CD8-positive, alpha-beta T cell (primary cell): ENCODE measurements at regions of chr1 and their contacts with region 1.

Region 1: GRCh38 chr1:235783148-235783776 is 83.4 kb downstream of the LYST start:
- DNase-seq: peak in 2 of 9 experiments; percentile 20 to 39
- ATAC-seq: no peak
- H3K4me3 ChIP-seq: no peak overlapping the region
- H3K4me3 Mint-ChIP-seq: no peak overlapping the region
- H3K27ac ChIP-seq: no peak overlapping the region
- H3K27ac Mint-ChIP-seq: no peak overlapping the region
- H3K4me1 ChIP-seq: no peaks in the 10 kb centered on the region
- H3K4me1 Mint-ChIP-seq: no peaks in the 10 kb centered on the region
- H3K27me3 ChIP-seq: no peaks in the 10 kb centered on the region
- H3K27me3 Mint-ChIP-seq: no peaks in the 10 kb centered on the region
- CTCF ChIP-seq: peak; percentile 63

Region 2: DNA sequence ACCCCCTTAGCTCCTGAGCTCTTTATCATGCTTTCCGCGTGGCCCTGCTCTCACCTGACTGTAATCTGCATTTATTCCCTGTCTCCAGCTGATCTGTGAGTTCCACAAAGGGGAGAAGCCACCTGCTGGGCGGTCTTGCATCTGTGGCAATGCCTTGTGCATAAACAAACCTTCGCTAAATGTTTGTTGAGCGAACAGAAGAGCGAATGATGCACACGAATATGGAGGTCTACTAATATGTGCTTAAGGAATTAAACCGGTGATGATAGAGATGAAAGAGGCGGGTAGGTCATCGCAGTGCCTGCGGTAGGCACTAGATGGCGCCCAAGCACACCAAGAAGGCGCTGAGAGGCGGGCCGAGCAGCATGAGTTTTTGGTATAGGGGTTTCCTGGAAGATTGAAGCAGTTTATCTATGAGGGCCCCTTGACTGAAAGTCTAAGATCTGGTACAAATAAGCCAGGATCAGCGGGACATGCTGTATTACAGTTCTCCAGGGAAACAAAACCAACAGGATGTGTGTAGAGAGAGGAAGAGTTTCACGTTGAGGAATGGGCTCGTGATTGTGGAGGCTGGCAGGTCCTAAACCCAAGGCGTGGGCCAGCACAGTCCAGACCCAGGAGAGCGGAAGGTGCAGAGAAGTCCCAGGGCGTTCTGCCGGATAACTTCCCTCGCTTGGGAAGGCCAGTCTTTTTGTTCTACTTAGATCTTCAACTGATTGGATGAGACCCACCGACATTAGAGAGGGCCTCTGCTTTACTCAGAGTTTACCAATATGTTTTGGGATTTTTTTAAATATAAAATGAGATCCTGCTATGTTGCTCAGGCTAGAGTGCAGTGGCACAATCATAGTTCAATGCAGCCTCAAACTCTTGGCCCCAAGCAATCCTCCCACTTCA is 689.3 kb before region 1 on chr1:
- CTCF ChIA-PET with region 1: no interaction called
- POLR2A ChIA-PET with region 1: no interaction called
- intact Hi-C with region 1: loop called in 1 of 2 experiments (anchors 5 kb)
- DNase-seq: peak; percentile 74 to 90 (median 82)
- ATAC-seq: peak; percentile 100
- H3K4me3 ChIP-seq: no peak overlapping the region
- H3K4me3 Mint-ChIP-seq: no peak overlapping the region
- H3K27ac ChIP-seq: no peak overlapping the region
- H3K27ac Mint-ChIP-seq: no peak overlapping the region
- H3K4me1 ChIP-seq: peaks cover 3% of the 10 kb centered on the region
- H3K4me1 Mint-ChIP-seq: peaks cover 7% of the 10 kb centered on the region
- H3K27me3 ChIP-seq: peaks cover 0 to 4% of the 10 kb centered on the region in 2 experiments
- H3K27me3 Mint-ChIP-seq: peaks cover 15% of the 10 kb centered on the region
- CTCF ChIP-seq: peak; percentile 91

Region 3: DNA sequence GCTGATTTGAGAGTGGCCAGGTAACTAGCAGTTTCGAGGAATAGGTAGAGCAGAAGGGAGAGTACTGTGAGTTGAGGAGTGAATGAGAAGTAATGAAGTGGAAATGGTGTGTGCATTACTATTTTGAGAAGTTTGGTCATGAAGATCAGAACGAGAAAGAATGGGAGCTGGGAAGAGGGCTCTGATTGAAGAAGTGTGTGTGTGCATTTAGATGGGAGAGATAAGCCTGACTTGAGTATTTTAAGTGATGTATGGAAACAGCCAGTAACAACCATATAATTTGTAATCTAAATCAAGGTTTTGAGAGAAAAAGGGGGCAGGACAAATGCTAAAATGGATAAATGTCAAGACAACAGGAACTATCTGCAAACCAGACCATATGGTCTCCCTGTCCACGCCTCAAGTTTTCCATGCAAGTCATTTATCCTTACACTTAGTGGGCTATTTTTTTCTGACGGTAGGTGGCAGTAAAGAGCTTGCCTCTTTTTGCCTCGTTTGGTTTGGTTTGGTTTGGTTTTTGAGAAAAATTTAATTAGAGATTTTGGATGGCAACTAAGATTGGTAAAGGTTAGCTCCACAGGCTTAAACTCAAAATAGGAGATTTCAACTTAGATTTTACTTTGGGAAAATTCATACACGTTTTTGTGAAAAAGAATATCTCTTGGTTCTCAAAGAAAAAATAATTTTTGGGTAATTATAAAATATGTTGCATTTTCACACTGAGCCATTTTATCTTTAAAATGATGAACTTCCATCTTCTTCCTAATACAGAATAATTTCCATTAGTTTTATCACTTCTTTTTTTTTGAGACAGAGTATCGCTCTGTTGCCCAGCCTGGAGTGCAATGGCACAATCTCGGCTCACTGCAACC is 269.5 kb before region 1 on chr1:
- CTCF ChIA-PET with region 1: interaction called, 44 read pairs
- POLR2A ChIA-PET with region 1: no interaction called
- intact Hi-C with region 1: loop called (anchors 1 to 2 kb)
- DNase-seq: peak in 5 of 9 experiments; percentile 14 to 77 (median 54)
- ATAC-seq: peak; percentile 55
- H3K4me3 ChIP-seq: no peak overlapping the region
- H3K4me3 Mint-ChIP-seq: no peak overlapping the region
- H3K27ac ChIP-seq: no peak overlapping the region
- H3K27ac Mint-ChIP-seq: no peak overlapping the region
- H3K4me1 ChIP-seq: no peaks in the 10 kb centered on the region
- H3K4me1 Mint-ChIP-seq: no peaks in the 10 kb centered on the region
- H3K27me3 ChIP-seq: no peaks in the 10 kb centered on the region
- H3K27me3 Mint-ChIP-seq: peaks cover 13% of the 10 kb centered on the region
- CTCF ChIP-seq: peak; percentile 94

Region 4: DNA sequence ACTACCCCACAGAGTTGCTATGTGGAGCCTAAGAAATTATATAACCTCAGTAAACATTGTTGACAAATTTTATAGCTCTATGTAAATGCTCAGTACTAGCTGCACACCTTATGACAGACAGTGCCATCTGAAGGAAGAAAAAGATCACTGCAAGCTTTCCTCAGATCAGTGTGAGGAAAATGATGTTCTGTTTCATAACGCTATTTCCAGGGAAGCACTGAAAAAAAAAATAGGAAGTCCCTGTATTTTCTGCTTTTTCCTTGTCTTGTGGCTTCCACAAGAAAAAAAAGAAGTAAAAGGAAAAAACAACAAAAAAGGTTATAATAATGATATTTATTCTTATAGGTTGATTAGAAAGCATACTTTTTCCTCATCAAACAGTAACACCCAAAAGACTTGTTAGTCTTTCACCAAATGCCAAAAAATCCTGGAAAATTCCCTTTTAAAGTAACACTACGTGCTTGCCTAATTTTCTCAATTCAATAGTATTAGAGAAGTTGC is 60.2 kb after region 1 on chr1:
- CTCF ChIA-PET with region 1: interaction called, 16 read pairs
- POLR2A ChIA-PET with region 1: no interaction called
- intact Hi-C with region 1: no loop called
- DNase-seq: peak in 2 of 9 experiments; percentile 44 to 64
- ATAC-seq: peak; percentile 81
- H3K4me3 ChIP-seq: no peak overlapping the region
- H3K4me3 Mint-ChIP-seq: no peak overlapping the region
- H3K27ac ChIP-seq: no peak overlapping the region
- H3K27ac Mint-ChIP-seq: no peak overlapping the region
- H3K4me1 ChIP-seq: peaks cover 14% of the 10 kb centered on the region
- H3K4me1 Mint-ChIP-seq: peaks cover 76% of the 10 kb centered on the region
- H3K27me3 ChIP-seq: no peaks in the 10 kb centered on the region
- H3K27me3 Mint-ChIP-seq: no peaks in the 10 kb centered on the region
- CTCF ChIP-seq: peak; percentile 65

Region 5: DNA sequence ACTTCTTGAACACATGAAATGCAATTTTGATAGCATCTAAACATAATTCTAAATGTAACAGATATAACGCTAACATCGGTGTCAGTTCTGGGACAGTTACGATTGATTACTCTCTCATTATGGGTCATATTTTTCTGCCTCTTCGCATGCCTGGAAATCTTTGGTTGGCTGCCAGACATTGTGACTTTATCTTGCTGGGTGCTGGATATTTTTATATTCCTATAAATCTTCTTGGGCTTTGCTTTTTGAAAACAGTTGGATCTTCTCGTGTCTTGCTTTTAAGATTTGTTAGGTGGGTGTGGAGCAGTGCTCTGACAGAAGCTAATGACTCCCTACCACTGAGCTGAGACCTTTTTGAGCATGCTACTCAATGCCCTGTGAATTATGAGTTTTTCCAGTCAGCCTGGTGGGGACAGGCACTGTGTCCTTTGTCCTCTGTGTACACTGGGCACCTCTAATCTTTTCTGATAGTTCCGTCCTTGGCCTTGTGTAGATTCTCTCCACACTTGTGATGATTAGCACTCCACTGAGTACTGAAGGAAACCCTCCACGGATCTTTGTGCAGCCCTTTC is 582.8 kb after region 1 on chr1:
- CTCF ChIA-PET with region 1: no interaction called
- POLR2A ChIA-PET with region 1: no interaction called
- intact Hi-C with region 1: no loop called
- DNase-seq: no peak
- ATAC-seq: no peak
- H3K4me3 ChIP-seq: no peak overlapping the region
- H3K4me3 Mint-ChIP-seq: no peak overlapping the region
- H3K27ac ChIP-seq: no peak overlapping the region
- H3K27ac Mint-ChIP-seq: no peak overlapping the region
- H3K4me1 ChIP-seq: no peaks in the 10 kb centered on the region
- H3K4me1 Mint-ChIP-seq: no peaks in the 10 kb centered on the region
- H3K27me3 ChIP-seq: no peaks in the 10 kb centered on the region
- H3K27me3 Mint-ChIP-seq: peaks cover 2% of the 10 kb centered on the region
- CTCF ChIP-seq: no peak